ENCODE measurements at regions of chr6 and their contacts with region 1.

Region 1: GRCh38 chr6:151451950-151452749 is at the start of gene RMND1:
- DNase-seq: peak; percentile 100
- ATAC-seq: peak; percentile 98 to 99 (median 99)
- H3K4me3 ChIP-seq: peak within 1 kb of the TSS; percentile 90
- H3K27ac ChIP-seq: peak within 1 kb of the TSS; percentile 94
- H3K4me1 ChIP-seq: peaks cover 17% of the 10 kb centered on the region
- H3K27me3 ChIP-seq: no peaks in the 10 kb centered on the region
- CTCF ChIP-seq: no peak
- total RNA-seq, gene RMND1: 8.0 to 11.7 (median 9.1) TPM

Region 2: DNA sequence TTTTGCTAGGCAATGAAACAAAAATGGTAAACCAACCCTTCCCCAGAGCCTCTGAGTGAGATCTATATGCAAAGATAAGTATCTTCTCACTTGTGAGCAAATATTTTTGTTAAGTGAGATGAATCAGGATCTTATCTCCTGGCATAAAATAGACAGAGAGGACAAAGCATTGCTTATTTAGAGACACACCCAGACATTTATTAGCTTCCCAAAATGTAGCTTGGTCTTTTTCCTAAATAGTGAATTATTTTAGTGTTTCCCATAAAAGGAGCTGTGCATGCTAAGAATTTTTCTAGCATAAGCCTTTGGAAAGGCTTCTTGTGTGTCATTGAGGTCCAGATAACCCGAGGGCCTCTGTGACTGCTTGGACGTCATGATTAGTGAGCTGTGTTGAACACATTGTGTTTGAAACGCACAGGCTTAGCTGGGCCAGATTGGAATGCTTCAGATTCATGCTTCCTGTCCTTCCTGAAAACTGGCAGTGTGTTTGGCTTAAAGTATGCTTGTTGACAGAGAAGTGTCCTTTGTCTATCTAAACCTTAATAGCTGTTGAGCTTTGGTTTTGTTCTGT is 570.2 kb before region 1 on chr6:
- intact Hi-C with region 1: loop called in 1 of 2 experiments (anchors 10 kb)
- DNase-seq: no peak
- ATAC-seq: peak in 1 of 4 donors; percentile 45
- H3K4me3 ChIP-seq: no peak overlapping the region
- H3K27ac ChIP-seq: peak overlapping the region; percentile 19
- H3K4me1 ChIP-seq: no peaks in the 10 kb centered on the region
- H3K27me3 ChIP-seq: no peaks in the 10 kb centered on the region
- CTCF ChIP-seq: no peak

Region 3: GRCh38 chr6:151390276-151391032 is 61.7 kb before region 1 on chr6:
- intact Hi-C with region 1: loop called (anchors 2 to 5 kb)
- DNase-seq: peak; percentile 98 to 99
- ATAC-seq: peak; percentile 87 to 93 (median 88)
- H3K4me3 ChIP-seq: peak overlapping the region; percentile 97
- H3K27ac ChIP-seq: peak overlapping the region; percentile 100
- H3K4me1 ChIP-seq: peaks cover 47% of the 10 kb centered on the region
- H3K27me3 ChIP-seq: no peaks in the 10 kb centered on the region
- CTCF ChIP-seq: no peak

Region 4: DNA sequence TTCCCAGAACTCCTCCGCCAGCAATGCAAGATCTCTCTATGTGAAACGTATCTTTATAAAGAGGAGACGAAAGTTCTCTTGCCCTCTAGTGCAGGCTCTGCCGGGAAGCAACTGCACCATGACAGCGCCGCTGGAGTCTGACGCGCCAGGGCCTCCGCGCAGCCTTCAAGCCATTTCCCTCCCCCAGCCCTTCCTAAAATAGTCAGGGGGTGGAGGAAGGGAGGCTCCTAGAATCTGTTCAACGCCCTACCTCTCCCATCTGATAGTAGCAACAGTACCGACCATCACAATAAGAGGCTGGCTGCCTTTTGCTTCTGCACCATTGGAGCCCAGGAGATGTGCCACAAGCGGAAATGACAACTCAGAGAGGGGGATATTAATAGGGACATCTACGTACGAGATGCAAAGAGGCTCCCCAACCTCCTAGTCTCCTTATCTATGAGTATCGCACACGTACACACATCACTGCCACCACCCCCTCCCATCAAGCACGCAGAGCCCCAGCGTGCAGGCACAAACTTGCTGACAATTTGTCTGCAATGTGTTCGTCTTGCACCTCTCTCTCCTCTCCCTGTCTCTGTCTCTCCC is 1184.0 kb after region 1 on chr6:
- intact Hi-C with region 1: no loop called
- DNase-seq: peak in 1 of 2 donors; percentile 15
- ATAC-seq: peak in 3 of 4 donors; percentile 49 to 68 (median 58)
- H3K4me3 ChIP-seq: peak overlapping the region; percentile 71
- H3K27ac ChIP-seq: peak overlapping the region; percentile 50
- H3K4me1 ChIP-seq: peaks cover 4% of the 10 kb centered on the region
- H3K27me3 ChIP-seq: peaks cover 0 to 28% (median 0%) of the 10 kb centered on the region in 3 donors
- CTCF ChIP-seq: no peak

Measured in psoas muscle (tissue), 8 donors.